Activated CD4-positive, alpha-beta memory T cell treated with anti-CD3 and anti-CD28 coated beads for 36 hours (primary cell): ENCODE measurements at regions of chrX and their contacts with region 1.

Region 1: DNA sequence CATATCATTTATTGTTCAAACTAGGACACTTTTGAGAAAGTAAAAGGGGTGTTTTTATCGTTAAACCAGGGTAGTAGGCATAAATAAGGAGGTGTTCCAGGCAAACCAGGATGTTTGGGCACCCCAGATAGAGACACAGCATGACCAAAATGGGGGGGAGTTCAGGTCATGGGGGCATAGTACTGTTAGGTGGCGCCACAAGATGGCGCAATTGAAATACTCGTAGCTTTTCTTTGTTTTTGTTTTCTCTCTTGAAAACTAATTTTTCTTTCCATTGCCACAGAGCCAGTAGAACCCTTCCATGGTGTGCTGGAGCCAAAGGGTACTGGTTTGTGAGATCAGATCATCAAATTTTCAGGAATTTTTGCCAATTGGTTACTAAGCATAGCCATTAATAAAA is 283.4 kb downstream of the BCOR start:
- DNase-seq: peak; percentile 52
- H3K4me3 Mint-ChIP-seq: no peak overlapping the region
- H3K27ac Mint-ChIP-seq: no peak overlapping the region
- H3K4me1 Mint-ChIP-seq: peaks cover 31% of the 10 kb centered on the region
- H3K27me3 Mint-ChIP-seq: no peaks in the 10 kb centered on the region

Region 2: DNA sequence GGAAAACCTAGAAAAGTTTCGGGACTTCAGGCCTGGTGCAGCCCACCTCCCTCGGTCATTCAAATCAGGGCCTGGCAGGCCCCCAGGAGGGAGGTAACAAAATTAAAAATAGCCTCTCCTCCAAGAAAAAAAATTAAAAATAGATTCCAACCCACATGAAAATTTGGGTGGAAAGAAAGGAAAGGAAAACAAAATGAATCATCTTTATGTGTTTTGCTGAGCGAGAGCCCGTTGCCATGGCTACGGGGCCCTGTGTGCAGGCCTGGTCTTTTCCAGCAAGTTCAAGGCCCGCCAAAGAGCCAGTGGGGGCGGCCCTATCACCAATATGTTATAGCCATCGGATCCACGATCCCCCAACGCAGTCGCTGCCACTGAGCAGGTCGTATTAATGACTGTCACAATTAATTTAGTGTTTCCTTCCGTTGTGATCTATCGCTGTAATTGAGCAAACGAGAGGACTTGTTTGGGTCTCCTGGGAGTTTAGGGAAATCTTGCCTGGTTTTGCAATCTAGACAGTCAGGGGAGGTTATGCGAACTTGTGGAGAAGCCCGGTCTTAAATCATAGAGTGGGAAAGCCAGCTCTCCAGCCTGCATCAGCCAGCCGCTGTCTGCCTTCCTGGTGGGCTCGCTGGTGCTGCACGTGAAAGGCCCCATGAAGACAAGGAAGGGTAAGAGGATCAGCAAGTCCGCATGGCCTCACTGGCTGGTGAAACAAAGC is 169.1 kb before region 1 on chrX:
- CTCF ChIA-PET with region 1: no interaction called
- POLR2A ChIA-PET with region 1: no interaction called
- intact Hi-C with region 1: no loop called
- DNase-seq: peak; percentile 53
- H3K4me3 Mint-ChIP-seq: no peak overlapping the region
- H3K27ac Mint-ChIP-seq: no peak overlapping the region
- H3K4me1 Mint-ChIP-seq: peaks cover 20% of the 10 kb centered on the region
- H3K27me3 Mint-ChIP-seq: no peaks in the 10 kb centered on the region

Region 3: GRCh38 chrX:39772057-39772832 is 42.1 kb before region 1 on chrX:
- CTCF ChIA-PET with region 1: interaction called, 3 read pairs
- POLR2A ChIA-PET with region 1: interaction called, 3 read pairs
- intact Hi-C with region 1: loop called (anchors 2 kb)
- DNase-seq: peak; percentile 86
- H3K4me3 Mint-ChIP-seq: peak overlapping the region; percentile 55
- H3K27ac Mint-ChIP-seq: peak overlapping the region; percentile 98
- H3K4me1 Mint-ChIP-seq: peaks cover 48% of the 10 kb centered on the region
- H3K27me3 Mint-ChIP-seq: no peaks in the 10 kb centered on the region

Region 4: DNA sequence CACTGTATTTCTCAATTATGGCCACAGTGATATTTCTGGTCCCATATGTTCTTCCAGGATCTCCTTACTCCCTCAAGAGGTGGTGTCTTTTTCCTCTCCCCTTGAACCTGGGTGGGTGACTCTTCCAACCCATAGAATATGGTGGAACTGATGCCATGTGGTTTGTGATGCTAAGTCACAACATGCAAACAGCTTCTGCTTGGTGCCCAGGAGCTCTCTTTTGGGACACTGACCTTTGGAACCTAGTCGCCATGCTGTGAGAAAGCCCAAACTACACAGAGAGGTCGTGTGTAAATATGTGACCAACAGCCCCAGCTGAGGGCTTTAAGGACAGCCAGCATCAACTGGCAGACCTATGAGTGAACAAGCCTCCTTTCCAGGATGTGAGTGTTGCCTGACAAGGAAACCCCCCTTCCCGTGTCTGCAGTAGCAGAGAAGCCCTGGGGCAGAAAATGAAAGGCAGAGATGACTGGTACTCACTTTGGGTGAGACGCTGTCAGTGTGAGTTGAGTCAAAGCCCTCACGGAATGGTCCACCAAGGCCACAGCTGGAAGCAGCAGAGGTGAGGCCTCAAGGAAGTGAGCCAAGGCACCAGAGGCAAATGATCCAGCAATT is 59.9 kb after region 1 on chrX:
- CTCF ChIA-PET with region 1: no interaction called
- POLR2A ChIA-PET with region 1: interaction called, 3 read pairs
- intact Hi-C with region 1: loop called (anchors 5 kb)
- DNase-seq: peak; percentile 88
- H3K4me3 Mint-ChIP-seq: no peak overlapping the region
- H3K27ac Mint-ChIP-seq: peak overlapping the region; percentile 93
- H3K4me1 Mint-ChIP-seq: peaks cover 51% of the 10 kb centered on the region
- H3K27me3 Mint-ChIP-seq: peaks cover 4% of the 10 kb centered on the region

Region 5: DNA sequence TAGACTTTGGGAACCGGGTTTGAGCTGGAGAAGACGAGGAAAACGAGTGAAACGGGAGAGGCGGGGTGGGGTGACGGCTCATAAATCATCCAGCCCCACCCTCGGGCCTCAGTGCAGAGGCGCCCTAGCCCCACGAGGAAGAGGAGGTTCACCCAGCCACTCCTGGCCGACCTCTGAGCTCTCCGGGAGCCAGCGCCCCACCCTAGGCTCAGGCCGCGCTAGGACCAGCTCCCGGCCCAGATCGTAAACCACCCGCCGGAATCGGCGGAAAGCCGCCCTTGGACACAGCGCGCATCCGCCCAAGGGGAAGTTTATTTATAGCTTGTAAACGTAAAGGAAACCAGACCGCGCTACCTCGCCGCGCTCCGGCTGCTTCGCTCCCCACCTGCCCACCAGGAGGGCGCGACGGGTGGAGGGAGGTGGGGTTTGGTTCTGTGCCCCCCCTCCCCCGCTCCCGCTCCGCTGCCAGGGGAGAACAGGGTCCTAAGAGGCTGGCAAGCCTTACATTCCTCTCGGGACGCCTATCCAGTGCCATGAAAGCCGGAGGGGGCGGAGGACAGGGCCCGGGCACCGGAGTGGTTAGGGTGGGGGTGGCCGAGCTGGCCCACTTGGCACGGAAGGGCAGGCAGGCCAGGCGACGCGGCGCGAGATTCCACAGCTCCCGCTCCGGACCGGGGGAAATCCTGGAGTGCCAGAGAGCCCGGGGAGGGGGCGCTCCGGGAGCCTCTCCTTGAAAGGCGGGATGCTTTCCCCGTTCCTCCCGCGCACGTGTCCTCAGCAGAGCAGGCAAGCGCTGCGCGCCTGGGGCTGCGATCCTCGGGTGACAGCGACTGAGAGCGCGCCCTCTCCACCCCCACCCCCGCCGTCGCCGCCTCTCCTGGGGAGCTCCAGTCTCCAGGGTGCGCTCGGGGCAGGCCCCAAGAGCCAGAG is 199.1 kb after region 1 on chrX:
- CTCF ChIA-PET with region 1: no interaction called
- POLR2A ChIA-PET with region 1: interaction called, 3 read pairs
- intact Hi-C with region 1: loop called (anchors 5 kb)
- DNase-seq: peak; percentile 53
- H3K4me3 Mint-ChIP-seq: peak overlapping the region; percentile 71
- H3K27ac Mint-ChIP-seq: peak overlapping the region; percentile 66
- H3K4me1 Mint-ChIP-seq: peaks cover 18% of the 10 kb centered on the region
- H3K27me3 Mint-ChIP-seq: peaks cover 17% of the 10 kb centered on the region

Region 6: DNA sequence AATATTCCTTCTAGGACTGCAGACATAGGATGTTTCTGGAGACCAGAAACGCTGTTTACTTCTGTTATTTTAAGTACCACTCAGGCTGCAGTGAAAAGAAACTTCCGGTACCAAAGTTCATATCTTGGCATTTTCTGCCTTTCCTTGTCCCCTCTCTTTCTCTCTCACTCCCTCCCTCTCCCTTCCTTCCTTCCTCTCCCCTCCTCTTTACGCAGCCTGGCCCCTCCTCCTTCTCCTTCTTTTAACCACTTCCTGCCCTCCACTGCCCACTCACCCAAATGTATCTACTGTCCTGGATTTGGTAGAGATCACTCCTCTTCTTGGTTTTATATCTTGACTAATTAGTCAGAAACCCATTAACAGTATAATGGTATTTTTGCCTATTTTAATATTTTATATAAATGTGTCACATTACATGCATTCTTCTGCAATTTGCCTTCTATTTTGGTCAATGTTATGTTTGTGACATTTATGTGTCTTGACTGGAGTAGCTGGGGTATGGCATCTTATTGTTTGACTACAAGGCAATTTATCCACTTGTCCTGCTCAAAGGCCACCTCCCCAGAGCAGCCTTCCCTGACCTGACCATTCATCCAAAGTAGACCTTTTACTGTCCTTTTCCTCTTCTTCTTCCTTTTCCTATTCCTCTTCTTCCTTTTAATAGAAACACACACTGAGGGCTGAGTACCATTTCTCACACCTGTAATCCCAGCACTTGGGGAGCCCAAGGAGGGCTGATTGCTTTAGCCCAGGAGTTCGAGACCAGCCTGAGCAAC is 226.5 kb after region 1 on chrX:
- CTCF ChIA-PET with region 1: no interaction called
- POLR2A ChIA-PET with region 1: no interaction called
- intact Hi-C with region 1: no loop called
- DNase-seq: peak; percentile 20
- H3K4me3 Mint-ChIP-seq: no peak overlapping the region
- H3K27ac Mint-ChIP-seq: no peak overlapping the region
- H3K4me1 Mint-ChIP-seq: peaks cover 19% of the 10 kb centered on the region
- H3K27me3 Mint-ChIP-seq: no peaks in the 10 kb centered on the region

Region 7: DNA sequence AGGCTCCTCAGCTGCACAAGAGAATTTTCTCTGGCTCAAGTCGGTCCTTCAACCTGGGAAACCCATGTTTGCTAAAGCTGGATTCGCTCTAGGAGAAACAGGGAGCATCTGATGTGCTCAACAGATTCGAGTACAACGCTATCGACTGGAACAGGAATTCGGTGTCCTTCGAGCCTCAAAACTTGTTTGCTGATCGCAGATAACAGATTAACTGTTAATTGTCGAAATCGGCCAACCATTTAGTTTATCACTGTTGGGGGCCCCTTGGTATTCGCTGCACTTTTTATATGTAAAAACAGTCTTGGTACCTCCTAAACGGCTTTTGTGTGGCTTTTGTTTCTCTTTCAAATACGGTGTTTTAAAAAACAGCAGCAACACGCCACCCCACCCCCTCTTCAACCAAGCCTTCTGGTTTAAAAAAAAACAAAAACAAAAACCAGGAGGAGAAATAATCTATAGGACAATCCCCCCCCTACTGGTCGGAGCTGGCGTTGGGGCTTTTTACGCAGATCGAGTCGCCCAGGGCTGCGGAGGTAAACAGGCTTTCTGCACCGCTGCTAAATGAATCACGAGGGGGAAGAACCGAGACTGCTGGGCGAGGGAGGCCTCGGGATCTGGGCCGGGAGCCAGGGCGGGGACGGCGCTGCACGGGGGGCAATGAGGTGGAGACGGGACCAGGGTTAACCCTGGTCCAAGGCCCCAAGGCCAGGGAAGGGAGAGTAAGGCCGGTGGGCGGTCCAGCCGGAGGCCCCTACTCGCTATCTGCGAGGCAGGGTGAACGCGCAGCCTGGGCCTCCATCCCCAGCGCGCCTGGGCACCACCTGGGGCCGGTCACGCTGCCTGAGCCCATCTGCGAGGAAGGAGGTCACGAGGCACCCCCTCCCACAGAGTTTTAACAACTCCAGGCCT is 355.1 kb after region 1 on chrX:
- CTCF ChIA-PET with region 1: interaction called, 5 read pairs
- POLR2A ChIA-PET with region 1: interaction called, 3 read pairs
- intact Hi-C with region 1: loop called (anchors 2 kb)
- DNase-seq: peak; percentile 90
- H3K4me3 Mint-ChIP-seq: peak overlapping the region; percentile 90
- H3K27ac Mint-ChIP-seq: peak overlapping the region; percentile 100
- H3K4me1 Mint-ChIP-seq: peaks cover 37% of the 10 kb centered on the region
- H3K27me3 Mint-ChIP-seq: no peaks in the 10 kb centered on the region

Region 8: DNA sequence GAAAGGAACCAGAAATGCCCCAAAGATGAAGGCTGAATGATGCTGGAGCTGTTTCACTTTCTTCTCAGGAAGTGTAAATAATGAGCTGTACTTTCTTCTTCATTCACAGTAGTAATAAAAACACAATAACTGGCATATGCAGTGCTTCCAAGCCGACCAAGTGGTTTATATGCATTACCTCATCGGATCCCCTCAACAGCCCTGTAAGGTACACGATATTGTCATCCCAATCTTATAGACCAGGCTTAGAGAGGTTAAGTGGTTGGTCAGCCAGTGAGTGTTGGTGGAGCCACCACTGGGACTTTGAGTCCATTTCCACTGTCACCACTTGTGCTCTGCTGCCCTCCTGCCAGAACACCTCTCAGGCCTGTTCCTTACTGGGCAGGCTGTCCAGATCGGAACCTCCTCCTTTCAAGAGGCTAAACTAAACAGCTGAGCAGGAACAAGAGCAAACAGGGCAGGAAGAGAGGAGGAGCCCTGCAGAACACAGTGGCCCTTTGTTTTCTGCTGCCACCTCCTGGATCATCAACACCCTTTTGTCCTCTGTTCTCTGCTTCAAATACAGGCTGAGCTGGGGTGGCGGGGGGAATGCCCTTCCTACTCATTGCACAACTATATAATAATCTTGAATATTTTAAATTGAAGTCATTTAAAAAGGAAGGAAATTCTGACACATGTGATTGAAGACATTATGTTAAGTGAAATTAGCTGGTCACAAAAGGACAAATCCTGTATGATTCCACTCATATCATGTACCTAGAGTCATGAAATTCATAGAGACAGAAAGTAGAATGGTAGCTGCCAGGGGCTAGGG is 653.8 kb after region 1 on chrX:
- CTCF ChIA-PET with region 1: interaction called, 3 read pairs
- POLR2A ChIA-PET with region 1: no interaction called
- intact Hi-C with region 1: loop called (anchors 5 kb)
- DNase-seq: peak; percentile 68
- H3K4me3 Mint-ChIP-seq: no peak overlapping the region
- H3K27ac Mint-ChIP-seq: no peak overlapping the region
- H3K4me1 Mint-ChIP-seq: peaks cover 29% of the 10 kb centered on the region
- H3K27me3 Mint-ChIP-seq: no peaks in the 10 kb centered on the region